ENCODE measurements at regions of chr5 and their contacts with region 1.

Region 1: GRCh38 chr5:6827526-6828219 is 114.4 kb downstream of the TENT4A start:
- DNase-seq: peak; percentile 87
- H3K4me3 Mint-ChIP-seq: peak overlapping the region; percentile 85
- H3K27ac Mint-ChIP-seq: peak overlapping the region; percentile 94
- H3K4me1 Mint-ChIP-seq: peaks cover 55% of the 10 kb centered on the region
- H3K27me3 Mint-ChIP-seq: peaks cover 14% of the 10 kb centered on the region

Region 2: DNA sequence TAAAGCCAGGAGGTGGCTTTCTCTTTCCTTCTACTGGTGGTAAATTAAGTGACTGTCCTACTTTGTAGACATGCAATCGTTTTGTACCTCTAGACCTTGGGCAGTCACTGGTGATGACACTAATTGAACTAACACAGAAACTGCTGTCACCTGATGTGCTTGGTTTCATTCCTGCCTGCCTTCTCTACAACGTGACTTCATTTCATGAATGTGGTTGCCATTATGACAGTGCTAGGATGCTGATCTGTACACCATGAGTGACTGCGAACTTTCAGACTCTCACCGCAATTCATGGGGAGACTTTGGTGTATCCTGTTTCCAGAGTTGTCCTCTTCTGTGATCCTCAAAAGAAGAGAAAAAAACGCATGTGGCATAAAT is 331.5 kb before region 1 on chr5:
- intact Hi-C with region 1: loop called (anchors 5 kb)
- DNase-seq: peak; percentile 68
- H3K4me3 Mint-ChIP-seq: no peak overlapping the region
- H3K27ac Mint-ChIP-seq: peak overlapping the region; percentile 68
- H3K4me1 Mint-ChIP-seq: peaks cover 36% of the 10 kb centered on the region
- H3K27me3 Mint-ChIP-seq: peaks cover 10% of the 10 kb centered on the region

Region 3: GRCh38 chr5:6712577-6713275 is 114.9 kb before region 1 on chr5:
- intact Hi-C with region 1: loop called (anchors 2 kb)
- DNase-seq: peak; percentile 99
- H3K4me3 Mint-ChIP-seq: peak overlapping the region; percentile 89
- H3K27ac Mint-ChIP-seq: peak overlapping the region; percentile 97
- H3K4me1 Mint-ChIP-seq: peaks cover 35% of the 10 kb centered on the region
- H3K27me3 Mint-ChIP-seq: no peaks in the 10 kb centered on the region

Region 4: GRCh38 chr5:6849316-6850105 is 21.8 kb after region 1 on chr5:
- intact Hi-C with region 1: loop called (anchors 1 kb)
- DNase-seq: no peak
- H3K4me3 Mint-ChIP-seq: no peak overlapping the region
- H3K27ac Mint-ChIP-seq: no peak overlapping the region
- H3K4me1 Mint-ChIP-seq: peaks cover 6% of the 10 kb centered on the region
- H3K27me3 Mint-ChIP-seq: no peaks in the 10 kb centered on the region

Region 5: GRCh38 chr5:7074176-7074575 is 246.5 kb after region 1 on chr5:
- intact Hi-C with region 1: no loop called
- DNase-seq: no peak
- H3K4me3 Mint-ChIP-seq: no peak overlapping the region
- H3K27ac Mint-ChIP-seq: no peak overlapping the region
- H3K4me1 Mint-ChIP-seq: no peaks in the 10 kb centered on the region
- H3K27me3 Mint-ChIP-seq: no peaks in the 10 kb centered on the region